ENCODE measurements at regions of chr5 and their contacts with region 1.

Region 1: GRCh38 chr5:69326363-69326762 is 6.2 kb downstream of the CCDC125 start:
- DNase-seq: no peak
- ATAC-seq: no peak
- H3K4me3 ChIP-seq: no peak overlapping the region
- H3K27ac ChIP-seq: no peak overlapping the region
- H3K4me1 ChIP-seq: no peaks in the 10 kb centered on the region
- H3K27me3 ChIP-seq: no peaks in the 10 kb centered on the region
- CTCF ChIP-seq: no peak
- POLR2A ChIP-seq: no peak
- RAD21 ChIP-seq: no peak

Region 2: DNA sequence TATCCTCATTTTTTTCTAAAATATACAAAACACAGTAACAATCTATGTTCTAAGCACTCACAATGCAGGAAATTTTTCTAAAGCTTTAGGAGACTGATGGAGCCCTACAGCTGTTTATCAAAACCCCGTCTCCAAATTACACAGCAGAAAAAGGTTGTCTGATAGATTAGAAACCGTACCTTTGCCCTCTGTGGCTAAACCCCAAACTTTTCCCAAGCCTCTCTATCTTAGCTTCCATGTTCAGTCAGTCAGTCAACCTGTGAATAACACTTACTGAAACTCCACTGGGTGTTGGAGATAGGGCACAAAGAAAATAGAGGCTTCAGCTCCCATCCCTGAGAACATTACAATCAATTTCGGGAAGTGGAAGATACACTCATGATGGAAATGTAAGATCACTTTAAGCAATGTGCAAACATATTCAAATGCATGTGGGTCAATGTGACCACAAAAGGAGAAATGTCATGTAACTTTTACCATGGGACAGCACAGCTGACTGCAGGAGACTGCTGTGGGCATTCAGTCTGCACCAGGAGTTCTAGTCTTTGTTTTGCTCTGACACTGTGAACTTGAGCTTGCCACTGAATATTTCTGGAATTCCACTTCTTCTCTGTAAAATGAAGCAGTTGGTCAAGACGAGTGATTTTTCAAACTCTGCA is 1390.3 kb before region 1 on chr5:
- CTCF ChIA-PET with region 1: no interaction called
- POLR2A ChIA-PET with region 1: no interaction called
- dilution Hi-C with region 1: no loop called
- in situ Hi-C with region 1: no loop called
- intact Hi-C with region 1: no loop called
- DNase-seq: no peak
- ATAC-seq: no peak
- H3K4me3 ChIP-seq: no peak overlapping the region
- H3K27ac ChIP-seq: no peak overlapping the region
- H3K4me1 ChIP-seq: no peaks in the 10 kb centered on the region
- H3K27me3 ChIP-seq: no peaks in the 10 kb centered on the region
- CTCF ChIP-seq: no peak
- POLR2A ChIP-seq: no peak
- RAD21 ChIP-seq: no peak

Region 3: DNA sequence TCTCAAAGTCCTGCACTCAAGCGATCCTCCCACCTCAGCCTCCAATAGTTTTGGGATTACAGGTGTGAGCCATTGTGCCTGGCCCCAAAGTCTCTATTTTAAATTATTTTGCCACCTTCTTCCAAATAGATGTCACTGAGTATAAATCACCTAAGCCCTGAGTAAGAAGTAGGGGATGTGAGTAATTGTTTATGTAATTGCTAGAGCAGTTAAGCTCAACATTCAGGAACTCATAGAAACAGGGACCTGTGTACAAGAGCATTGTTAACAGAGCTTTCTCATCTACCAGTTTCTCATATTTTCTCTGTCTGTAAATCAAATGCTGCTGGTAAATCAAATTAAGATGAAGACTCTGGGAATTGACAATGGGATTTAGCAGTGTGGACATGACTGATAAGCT is 65.3 kb before region 1 on chr5:
- CTCF ChIA-PET with region 1: no interaction called
- POLR2A ChIA-PET with region 1: no interaction called
- dilution Hi-C with region 1: no loop called
- in situ Hi-C with region 1: no loop called
- intact Hi-C with region 1: no loop called
- DNase-seq: peak; percentile 83
- ATAC-seq: peak; percentile 85
- H3K4me3 ChIP-seq: no peak overlapping the region
- H3K27ac ChIP-seq: no peak overlapping the region
- H3K4me1 ChIP-seq: peaks cover 6% of the 10 kb centered on the region; the same call in 1 of the 2 replicates
- H3K27me3 ChIP-seq: no peaks in the 10 kb centered on the region
- CTCF ChIP-seq: no peak
- POLR2A ChIP-seq: no peak
- RAD21 ChIP-seq: no peak

Region 4: GRCh38 chr5:69293895-69294294 is 32.5 kb before region 1 on chr5:
- CTCF ChIA-PET with region 1: no interaction called
- POLR2A ChIA-PET with region 1: no interaction called
- dilution Hi-C with region 1: no loop called
- in situ Hi-C with region 1: loop called (anchors 5 kb)
- intact Hi-C with region 1: no loop called
- DNase-seq: no peak
- ATAC-seq: no peak
- H3K4me3 ChIP-seq: no peak overlapping the region
- H3K27ac ChIP-seq: no peak overlapping the region
- H3K4me1 ChIP-seq: peaks cover 8% of the 10 kb centered on the region
- H3K27me3 ChIP-seq: no peaks in the 10 kb centered on the region
- CTCF ChIP-seq: no peak
- POLR2A ChIP-seq: no peak
- RAD21 ChIP-seq: no peak

Measured in IMR-90 (cell line).